ENCODE measurements at regions of chr12 and their contacts with region 1.

Region 1: GRCh38 chr12:31715283-31715825 is 13.5 kb downstream of the AMN1 start:
- DNase-seq: no peak
- H3K4me3 ChIP-seq: no peak overlapping the region
- H3K27ac ChIP-seq: no peak overlapping the region
- H3K27me3 ChIP-seq: no peaks in the 10 kb centered on the region
- CTCF ChIP-seq: no peak

Region 2: GRCh38 chr12:31736472-31736871 is 21.1 kb after region 1 on chr12:
- CTCF ChIA-PET with region 1: interaction called, 10 read pairs
- POLR2A ChIA-PET with region 1: no interaction called
- DNase-seq: no peak
- H3K4me3 ChIP-seq: no peak overlapping the region
- H3K27ac ChIP-seq: no peak overlapping the region
- H3K27me3 ChIP-seq: no peaks in the 10 kb centered on the region
- CTCF ChIP-seq: no peak

Measured in AG04450 (cell line).